B cell (primary cell): ENCODE measurements at regions of chr19 and their contacts with region 1.

Region 1: GRCh38 chr19:10653715-10654492 is at the start of gene ILF3:
- DNase-seq: peak; percentile 100
- ATAC-seq: peak; percentile 80
- H3K4me3 ChIP-seq: peak within 1 kb of the TSS; percentile 67 to 100 (median 96)
- H3K4me3 Mint-ChIP-seq: peak within 1 kb of the TSS; percentile 98
- H3K27ac ChIP-seq: peak within 1 kb of the TSS; percentile 99 to 100
- H3K27ac Mint-ChIP-seq: peak within 1 kb of the TSS; percentile 100
- H3K4me1 ChIP-seq: peaks cover 28 to 35% of the 10 kb centered on the region in 2 donors
- H3K4me1 Mint-ChIP-seq: peaks cover 42% of the 10 kb centered on the region
- H3K27me3 ChIP-seq: no peaks in the 10 kb centered on the region
- H3K27me3 Mint-ChIP-seq: no peaks in the 10 kb centered on the region
- CTCF ChIP-seq: no peak
- total RNA-seq, gene ILF3: 359 and 378 TPM in 2 replicates

Region 2: GRCh38 chr19:10332955-10333757 is 320.7 kb before region 1 on chr19 and contains the start of gene RAVER1:
- CTCF ChIA-PET with region 1: no interaction called
- POLR2A ChIA-PET with region 1: no interaction called
- intact Hi-C with region 1: loop called (anchors 5 kb)
- DNase-seq: peak; percentile 99
- ATAC-seq: peak; percentile 97
- H3K4me3 ChIP-seq: peak within 1 kb of the TSS; percentile 63 to 94 (median 83)
- H3K4me3 Mint-ChIP-seq: peak within 1 kb of the TSS; percentile 97
- H3K27ac ChIP-seq: peak within 1 kb of the TSS; percentile 90 to 91
- H3K27ac Mint-ChIP-seq: peak within 1 kb of the TSS; percentile 97
- H3K4me1 ChIP-seq: peaks cover 14 to 24% of the 10 kb centered on the region in 2 donors
- H3K4me1 Mint-ChIP-seq: peaks cover 21% of the 10 kb centered on the region
- H3K27me3 ChIP-seq: no peaks in the 10 kb centered on the region
- H3K27me3 Mint-ChIP-seq: no peaks in the 10 kb centered on the region
- CTCF ChIP-seq: no peak
- total RNA-seq, gene RAVER1: 54.6 and 62.7 TPM in 2 replicates

Region 3: GRCh38 chr19:10602330-10603083 is 51.4 kb before region 1 on chr19:
- CTCF ChIA-PET with region 1: interaction called, 3 read pairs
- POLR2A ChIA-PET with region 1: interaction called, 8 read pairs
- intact Hi-C with region 1: loop called (anchors 1 kb)
- DNase-seq: peak; percentile 86
- ATAC-seq: peak; percentile 73
- H3K4me3 ChIP-seq: peak overlapping the region; percentile 89 to 100 (median 94)
- H3K4me3 Mint-ChIP-seq: peak overlapping the region; percentile 96
- H3K27ac ChIP-seq: peak overlapping the region; percentile 97 to 99
- H3K27ac Mint-ChIP-seq: peak overlapping the region; percentile 99
- H3K4me1 ChIP-seq: peaks cover 30 to 47% of the 10 kb centered on the region in 2 donors
- H3K4me1 Mint-ChIP-seq: peaks cover 37% of the 10 kb centered on the region
- H3K27me3 ChIP-seq: no peaks in the 10 kb centered on the region
- H3K27me3 Mint-ChIP-seq: no peaks in the 10 kb centered on the region
- CTCF ChIP-seq: no peak

Region 4: GRCh38 chr19:10760273-10760944 is 106.5 kb after region 1 on chr19:
- CTCF ChIA-PET with region 1: no interaction called
- POLR2A ChIA-PET with region 1: no interaction called
- intact Hi-C with region 1: loop called (anchors 1 kb)
- DNase-seq: peak; percentile 78
- ATAC-seq: peak; percentile 56
- H3K4me3 ChIP-seq: peak overlapping the region in 4 of 5 experiments; percentile 14 to 57 (median 28)
- H3K4me3 Mint-ChIP-seq: peak overlapping the region; percentile 85
- H3K27ac ChIP-seq: peak overlapping the region; percentile 86 to 92
- H3K27ac Mint-ChIP-seq: peak overlapping the region; percentile 94
- H3K4me1 ChIP-seq: peaks cover 63 to 92% of the 10 kb centered on the region in 2 donors
- H3K4me1 Mint-ChIP-seq: peaks cover 82% of the 10 kb centered on the region
- H3K27me3 ChIP-seq: no peaks in the 10 kb centered on the region
- H3K27me3 Mint-ChIP-seq: no peaks in the 10 kb centered on the region
- CTCF ChIP-seq: no peak

Region 5: DNA sequence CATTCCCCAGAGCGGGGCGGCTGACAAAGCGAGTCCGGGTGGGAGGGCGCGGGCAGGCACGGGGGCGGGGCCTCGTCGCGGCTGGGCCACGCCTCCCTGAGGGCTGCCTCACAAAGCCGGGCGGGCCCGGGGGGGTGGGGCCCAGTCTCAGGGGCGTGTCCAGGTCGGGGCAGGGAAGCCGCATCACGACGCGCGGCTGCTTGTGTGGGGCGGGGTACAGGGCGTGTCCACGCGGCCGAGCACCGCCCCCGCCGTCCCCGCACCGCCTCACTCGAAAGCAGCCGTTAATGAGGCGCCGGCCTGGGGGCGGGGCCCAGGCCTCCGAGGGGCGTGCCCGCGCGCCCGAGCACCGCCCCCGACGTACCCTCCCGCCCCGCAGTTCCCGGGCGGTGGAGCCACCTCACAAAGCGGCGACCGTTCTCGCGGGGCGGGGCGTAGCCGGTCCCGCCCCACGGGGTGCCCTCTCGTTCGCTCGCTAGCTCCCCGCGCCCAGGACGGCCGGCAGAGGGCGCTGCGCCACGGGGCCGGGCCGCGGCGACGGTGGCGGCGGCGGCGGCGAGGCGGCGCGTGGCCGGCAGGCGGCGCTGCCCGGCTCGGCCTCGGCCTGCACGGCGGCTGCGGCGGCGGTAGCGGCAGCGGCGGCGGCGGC is 217.2 kb after region 1 on chr19 and contains the start of gene CARM1:
- CTCF ChIA-PET with region 1: no interaction called
- POLR2A ChIA-PET with region 1: no interaction called
- intact Hi-C with region 1: loop called (anchors 5 kb)
- DNase-seq: peak; percentile 99
- ATAC-seq: peak; percentile 83
- H3K4me3 ChIP-seq: peak within 1 kb of the TSS; percentile 41 to 79 (median 67)
- H3K4me3 Mint-ChIP-seq: peak within 1 kb of the TSS; percentile 86
- H3K27ac ChIP-seq: peak within 1 kb of the TSS; percentile 75 to 79
- H3K27ac Mint-ChIP-seq: peak within 1 kb of the TSS; percentile 85
- H3K4me1 ChIP-seq: peaks cover 33 to 46% of the 10 kb centered on the region in 2 donors
- H3K4me1 Mint-ChIP-seq: peaks cover 43% of the 10 kb centered on the region
- H3K27me3 ChIP-seq: no peaks in the 10 kb centered on the region
- H3K27me3 Mint-ChIP-seq: no peaks in the 10 kb centered on the region
- CTCF ChIP-seq: peak; percentile 55
- total RNA-seq, gene CARM1: 29.4 and 33.0 TPM in 2 replicates